Right cardiac atrium (tissue), 5 donors: ENCODE measurements at regions of chrX and their contacts with region 1.

Region 1: DNA sequence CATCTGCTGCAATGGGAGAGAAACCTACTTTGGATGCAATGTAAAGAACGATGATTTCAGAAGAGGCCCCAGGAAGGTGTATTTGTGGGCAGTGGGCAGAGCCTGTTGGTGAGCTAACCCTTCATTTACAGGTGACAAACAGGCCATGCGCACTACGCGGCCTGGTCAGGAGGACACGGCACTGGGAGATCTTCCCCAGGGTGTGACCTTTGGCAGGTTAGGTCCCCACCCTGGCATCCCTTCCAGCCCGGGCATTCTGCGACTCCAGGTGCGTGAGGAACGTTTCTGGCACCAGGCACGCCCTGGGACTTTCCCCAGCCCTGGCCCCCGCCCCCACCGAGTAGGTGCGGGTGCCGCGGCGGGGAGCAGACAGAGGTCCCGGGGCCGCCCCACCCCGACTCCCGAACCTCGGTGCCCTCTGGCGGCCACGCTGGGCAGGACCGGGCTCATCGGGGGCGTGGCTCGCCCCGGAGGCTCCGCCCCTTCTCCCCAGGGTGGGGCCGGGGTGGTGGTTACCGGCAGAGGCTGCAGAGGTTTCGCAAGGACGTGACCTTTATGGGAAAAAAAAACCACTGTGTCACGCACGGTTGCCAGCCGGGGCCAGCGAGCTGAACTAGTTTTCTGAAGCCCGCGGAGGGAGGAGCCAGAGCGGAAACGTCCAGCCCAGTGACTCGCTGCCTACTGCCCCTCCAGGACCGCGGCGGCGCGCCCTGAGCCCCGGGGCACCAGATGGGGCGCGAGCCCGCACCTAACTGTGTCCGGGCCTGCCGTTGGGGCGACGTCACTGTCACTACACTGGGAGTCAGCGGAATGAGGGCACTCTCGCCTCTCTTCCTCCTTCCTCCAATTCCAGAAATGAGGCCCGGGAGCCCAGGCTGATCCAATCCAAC is 5.0 kb upstream of the NYX start:
- DNase-seq: peak; percentile 91 to 93 (median 93)
- ATAC-seq: peak; percentile 95 to 97
- H3K4me3 ChIP-seq: peak overlapping the region; percentile 43
- H3K27ac ChIP-seq: peak overlapping the region; percentile 75
- H3K4me1 ChIP-seq: no peaks in the 10 kb centered on the region
- H3K27me3 ChIP-seq: no peaks in the 10 kb centered on the region

Region 2: GRCh38 chrX:41127477-41128192 is 314.5 kb before region 1 on chrX:
- intact Hi-C with region 1: no loop called
- DNase-seq: no peak
- ATAC-seq: no peak
- H3K4me3 ChIP-seq: no peak overlapping the region
- H3K27ac ChIP-seq: peak overlapping the region; percentile 37
- H3K4me1 ChIP-seq: no peaks in the 10 kb centered on the region
- H3K27me3 ChIP-seq: no peaks in the 10 kb centered on the region

Region 3: DNA sequence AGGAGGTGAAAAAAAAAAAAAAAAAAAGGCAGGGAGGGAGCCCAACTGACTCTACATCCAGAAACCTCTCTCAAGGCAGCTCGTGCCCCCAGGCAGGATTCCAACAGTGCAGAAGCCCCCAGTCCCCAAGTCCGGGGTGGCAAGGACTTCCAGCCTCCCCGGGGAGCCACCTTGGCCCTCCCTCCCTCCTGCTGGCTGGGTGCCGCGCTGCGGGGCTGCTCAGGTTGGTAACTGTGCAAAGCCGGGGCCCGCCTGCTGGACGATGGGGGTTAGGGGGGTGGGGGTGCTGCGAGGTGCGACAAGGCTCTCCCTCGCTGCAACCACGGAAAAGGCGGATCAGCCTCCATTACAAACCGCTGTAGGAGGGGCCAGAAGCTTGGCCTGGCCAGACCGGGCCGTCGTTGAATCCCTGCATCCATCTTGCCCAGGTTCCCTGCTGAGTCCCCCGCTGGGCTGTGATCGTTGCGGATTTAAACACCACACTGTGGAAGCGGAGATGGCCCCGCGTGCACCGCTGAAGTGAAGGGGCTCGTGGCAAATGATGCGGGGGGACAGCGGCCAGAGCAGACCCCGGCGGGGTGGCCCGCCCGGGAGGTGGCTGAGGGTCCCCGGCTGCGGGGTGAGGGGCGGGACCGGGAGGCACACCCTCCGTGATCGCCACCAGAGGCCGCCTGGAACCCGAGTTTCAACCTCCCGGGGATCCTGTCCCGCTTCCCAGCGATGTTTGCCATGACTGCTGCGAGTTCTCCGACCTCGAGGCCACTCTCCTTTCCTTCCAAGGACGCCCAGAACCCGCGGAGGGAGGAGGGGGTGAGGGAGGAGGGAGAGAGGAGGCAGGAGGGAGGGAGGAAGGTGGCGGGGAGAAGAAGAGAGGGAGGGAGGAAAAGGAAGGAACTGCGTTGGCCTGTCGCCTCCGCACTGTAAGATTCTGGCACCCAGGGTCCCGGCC is 166.2 kb before region 1 on chrX:
- intact Hi-C with region 1: loop called in 1 of 4 experiments (anchors 5 kb)
- DNase-seq: peak; percentile 71 to 88 (median 88)
- ATAC-seq: peak; percentile 92 to 96
- H3K4me3 ChIP-seq: peak overlapping the region; percentile 51
- H3K27ac ChIP-seq: peak overlapping the region; percentile 26
- H3K4me1 ChIP-seq: peaks cover 1% of the 10 kb centered on the region
- H3K27me3 ChIP-seq: no peaks in the 10 kb centered on the region